Caco-2 (cell line): ENCODE measurements at regions of chr5 and their contacts with region 1.

Region 1: GRCh38 chr5:52491071-52491787 is 296.5 kb upstream of the ITGA1 start:
- DNase-seq: no peak
- H3K4me3 ChIP-seq: no peak overlapping the region
- H3K4me3 Mint-ChIP-seq: no peak overlapping the region
- H3K27ac Mint-ChIP-seq: no peak overlapping the region
- H3K4me1 ChIP-seq: no peaks in the 10 kb centered on the region; the same call in 1 of the 2 replicates
- H3K4me1 Mint-ChIP-seq: no peaks in the 10 kb centered on the region
- H3K27me3 ChIP-seq: no peaks in the 10 kb centered on the region
- H3K27me3 Mint-ChIP-seq: no peaks in the 10 kb centered on the region
- CTCF ChIP-seq: no peak

Region 2: GRCh38 chr5:52453176-52453575 is 38.1 kb before region 1 on chr5:
- CTCF ChIA-PET with region 1: no interaction called
- POLR2A ChIA-PET with region 1: no interaction called
- intact Hi-C with region 1: loop called (anchors 1 kb)
- DNase-seq: no peak
- H3K4me3 ChIP-seq: no peak overlapping the region
- H3K4me3 Mint-ChIP-seq: no peak overlapping the region
- H3K27ac Mint-ChIP-seq: no peak overlapping the region
- H3K4me1 ChIP-seq: no peaks in the 10 kb centered on the region
- H3K4me1 Mint-ChIP-seq: no peaks in the 10 kb centered on the region
- H3K27me3 ChIP-seq: no peaks in the 10 kb centered on the region
- H3K27me3 Mint-ChIP-seq: no peaks in the 10 kb centered on the region
- CTCF ChIP-seq: no peak